Activated CD4-positive, alpha-beta T cell treated with anti-CD3 and anti-CD28 coated beads for 36 hours (primary cell): ENCODE measurements at regions of chr14 and their contacts with region 1.

Region 1: GRCh38 chr14:93970549-93970946 is 5.8 kb downstream of the ASB2 start:
- DNase-seq: peak; percentile 83
- ATAC-seq: peak; percentile 74
- H3K4me3 Mint-ChIP-seq: peak overlapping the region; percentile 70
- H3K27ac Mint-ChIP-seq: peak overlapping the region; percentile 97
- H3K4me1 Mint-ChIP-seq: peaks cover 75% of the 10 kb centered on the region
- H3K27me3 Mint-ChIP-seq: peaks cover 2% of the 10 kb centered on the region

Region 2: GRCh38 chr14:93184388-93185353 is 785.9 kb before region 1 on chr14 and contains the starts of genes LYSET and MOAP1:
- CTCF ChIA-PET with region 1: no interaction called
- POLR2A ChIA-PET with region 1: no interaction called
- intact Hi-C with region 1: loop called in 1 of 2 experiments (anchors 10 kb)
- DNase-seq: peak; percentile 95
- ATAC-seq: peak; percentile 90
- H3K4me3 Mint-ChIP-seq: peak within 1 kb of the TSS; percentile 91
- H3K27ac Mint-ChIP-seq: peak within 1 kb of the TSS; percentile 93
- H3K4me1 Mint-ChIP-seq: peaks cover 40% of the 10 kb centered on the region
- H3K27me3 Mint-ChIP-seq: no peaks in the 10 kb centered on the region
- total RNA-seq, gene LYSET: 9.9 to 10.2 TPM
- total RNA-seq, gene MOAP1: 11.7 to 15.9 TPM

Region 3: GRCh38 chr14:93994919-93995682 is 24.6 kb after region 1 on chr14:
- CTCF ChIA-PET with region 1: interaction called, 18 read pairs
- POLR2A ChIA-PET with region 1: interaction called, 3 read pairs
- intact Hi-C with region 1: loop called (anchors 1 to 2 kb)
- DNase-seq: peak; percentile 87
- ATAC-seq: peak; percentile 92
- H3K4me3 Mint-ChIP-seq: no peak overlapping the region
- H3K27ac Mint-ChIP-seq: peak overlapping the region; percentile 64
- H3K4me1 Mint-ChIP-seq: peaks cover 53% of the 10 kb centered on the region
- H3K27me3 Mint-ChIP-seq: no peaks in the 10 kb centered on the region

Region 4: GRCh38 chr14:94001501-94002396 is 31.2 kb after region 1 on chr14:
- CTCF ChIA-PET with region 1: interaction called, 18 read pairs
- POLR2A ChIA-PET with region 1: no interaction called
- intact Hi-C with region 1: loop called in 1 of 2 experiments (anchors 2 kb)
- DNase-seq: peak; percentile 78
- ATAC-seq: peak; percentile 84
- H3K4me3 Mint-ChIP-seq: no peak overlapping the region
- H3K27ac Mint-ChIP-seq: peak overlapping the region; percentile 77
- H3K4me1 Mint-ChIP-seq: peaks cover 24% of the 10 kb centered on the region
- H3K27me3 Mint-ChIP-seq: peaks cover 5% of the 10 kb centered on the region

Region 5: GRCh38 chr14:94136575-94137331 is 166.2 kb after region 1 on chr14:
- CTCF ChIA-PET with region 1: no interaction called
- POLR2A ChIA-PET with region 1: no interaction called
- intact Hi-C with region 1: no loop called
- DNase-seq: peak; percentile 93
- ATAC-seq: peak; percentile 90
- H3K4me3 Mint-ChIP-seq: no peak overlapping the region
- H3K27ac Mint-ChIP-seq: no peak overlapping the region
- H3K4me1 Mint-ChIP-seq: peaks cover 5% of the 10 kb centered on the region
- H3K27me3 Mint-ChIP-seq: peaks cover 6% of the 10 kb centered on the region

Region 6: DNA sequence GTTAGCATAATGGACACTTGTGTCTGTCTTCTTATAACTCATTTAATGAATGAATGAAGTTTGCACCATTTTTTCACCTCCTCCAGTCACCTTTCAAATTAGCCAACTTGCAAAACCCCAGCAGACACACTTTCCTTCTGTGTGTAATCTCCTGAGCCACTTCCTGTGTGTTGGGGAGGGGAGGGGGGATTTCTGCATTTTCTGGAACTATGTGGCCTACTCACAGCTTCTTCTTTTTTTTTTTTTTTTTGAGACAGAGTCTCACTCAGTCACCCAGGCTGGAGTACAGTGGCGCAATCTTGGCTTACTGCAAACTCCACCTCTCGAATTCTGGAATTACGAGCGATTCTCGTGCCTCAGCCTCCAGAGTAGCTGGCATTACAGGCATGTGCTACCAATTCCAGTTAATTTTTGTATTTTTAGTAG is 422.0 kb after region 1 on chr14:
- CTCF ChIA-PET with region 1: no interaction called
- POLR2A ChIA-PET with region 1: no interaction called
- intact Hi-C with region 1: loop called (anchors 5 to 10 kb)
- DNase-seq: peak; percentile 84
- ATAC-seq: peak; percentile 67
- H3K4me3 Mint-ChIP-seq: no peak overlapping the region
- H3K27ac Mint-ChIP-seq: peak overlapping the region; percentile 97
- H3K4me1 Mint-ChIP-seq: peaks cover 70% of the 10 kb centered on the region
- H3K27me3 Mint-ChIP-seq: peaks cover 5% of the 10 kb centered on the region

Region 7: GRCh38 chr14:95265106-95266094 is 1294.9 kb after region 1 on chr14:
- CTCF ChIA-PET with region 1: no interaction called
- POLR2A ChIA-PET with region 1: no interaction called
- intact Hi-C with region 1: loop called in 1 of 2 experiments (anchors 10 kb)
- DNase-seq: peak; percentile 66
- ATAC-seq: peak; percentile 83
- H3K4me3 Mint-ChIP-seq: no peak overlapping the region
- H3K27ac Mint-ChIP-seq: peak overlapping the region; percentile 35
- H3K4me1 Mint-ChIP-seq: peaks cover 39% of the 10 kb centered on the region
- H3K27me3 Mint-ChIP-seq: no peaks in the 10 kb centered on the region